Naive thymus-derived CD4-positive, alpha-beta T cell (primary cell): ENCODE measurements at regions of chr11 and their contacts with region 1.

Region 1: DNA sequence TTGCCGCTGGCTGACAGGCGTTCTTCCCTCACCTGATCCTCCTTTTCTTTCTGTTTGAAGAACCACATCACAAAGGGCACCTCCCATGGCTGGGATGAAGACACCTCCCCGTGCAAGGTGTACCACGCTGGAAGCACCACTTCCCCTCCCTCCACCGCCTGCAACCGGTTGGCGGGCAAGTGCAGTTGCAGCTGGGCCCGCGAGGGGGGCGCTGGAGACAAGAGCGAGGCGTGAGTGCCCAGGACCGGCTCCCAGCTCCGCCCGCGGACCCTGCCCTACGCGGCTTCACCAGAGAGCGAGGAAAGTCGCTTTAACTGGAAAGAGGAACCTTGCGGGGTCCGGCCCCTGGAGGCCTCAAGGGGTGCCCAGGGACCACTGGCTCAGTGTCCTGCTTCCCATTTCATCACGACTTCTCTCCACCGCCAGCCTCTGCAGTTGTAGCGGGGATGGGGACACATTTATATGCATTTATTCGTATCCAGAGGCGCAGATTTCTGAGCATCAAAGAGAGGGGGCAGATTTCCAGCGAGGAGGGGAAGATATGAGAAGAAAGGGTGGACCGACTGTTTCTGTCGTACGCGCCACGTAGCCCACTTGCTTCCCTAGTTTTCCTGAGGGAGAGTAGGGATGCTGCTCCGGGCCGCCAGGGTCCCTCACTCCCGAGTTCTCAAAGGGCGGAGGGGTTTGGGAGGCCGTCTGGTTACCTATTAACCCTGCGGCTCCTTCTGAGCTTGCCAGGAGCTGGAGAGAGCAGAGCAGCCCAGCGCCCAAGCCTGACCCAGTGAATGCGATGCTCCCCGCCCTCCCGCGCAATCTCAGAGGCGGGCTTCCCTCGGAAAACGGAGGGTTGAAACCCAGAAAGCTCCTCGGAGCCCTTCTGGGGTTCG is 3.5 kb downstream of the ESAM start:
- DNase-seq: peak in 8 of 9 donors; percentile 61 to 73 (median 66)
- ATAC-seq: peak; percentile 78
- H3K4me3 ChIP-seq: peak overlapping the region; percentile 27
- H3K4me3 Mint-ChIP-seq: peak overlapping the region; percentile 52 to 98 (median 76)
- H3K27ac ChIP-seq: no peak overlapping the region
- H3K27ac Mint-ChIP-seq: peak overlapping the region in 2 of 9 donors; percentile 38 to 41
- H3K4me1 ChIP-seq: peaks cover 8 to 31% of the 10 kb centered on the region in 2 donors
- H3K4me1 Mint-ChIP-seq: peaks cover 6 to 40% (median 24%) of the 10 kb centered on the region in 7 donors
- H3K27me3 ChIP-seq: peaks cover 7 to 16% of the 10 kb centered on the region in 2 donors
- H3K27me3 Mint-ChIP-seq: peaks cover 36 to 60% (median 53%) of the 10 kb centered on the region in 5 donors

Region 2: GRCh38 chr11:124415356-124415923 is 343.1 kb before region 1 on chr11:
- CTCF ChIA-PET with region 1: no interaction called
- POLR2A ChIA-PET with region 1: no interaction called
- intact Hi-C with region 1: loop called in 1 of 2 experiments (anchors 5 kb)
- DNase-seq: peak in 3 of 9 donors; percentile 0 to 11 (median 2)
- ATAC-seq: no peak
- H3K4me3 ChIP-seq: no peak overlapping the region
- H3K4me3 Mint-ChIP-seq: no peak overlapping the region
- H3K27ac ChIP-seq: no peak overlapping the region
- H3K27ac Mint-ChIP-seq: no peak overlapping the region
- H3K4me1 ChIP-seq: no peaks in the 10 kb centered on the region
- H3K4me1 Mint-ChIP-seq: peaks cover 0 to 2% (median 0%) of the 10 kb centered on the region in 7 donors
- H3K27me3 ChIP-seq: no peaks in the 10 kb centered on the region
- H3K27me3 Mint-ChIP-seq: peaks cover 6 to 35% (median 26%) of the 10 kb centered on the region in 5 donors

Region 3: DNA sequence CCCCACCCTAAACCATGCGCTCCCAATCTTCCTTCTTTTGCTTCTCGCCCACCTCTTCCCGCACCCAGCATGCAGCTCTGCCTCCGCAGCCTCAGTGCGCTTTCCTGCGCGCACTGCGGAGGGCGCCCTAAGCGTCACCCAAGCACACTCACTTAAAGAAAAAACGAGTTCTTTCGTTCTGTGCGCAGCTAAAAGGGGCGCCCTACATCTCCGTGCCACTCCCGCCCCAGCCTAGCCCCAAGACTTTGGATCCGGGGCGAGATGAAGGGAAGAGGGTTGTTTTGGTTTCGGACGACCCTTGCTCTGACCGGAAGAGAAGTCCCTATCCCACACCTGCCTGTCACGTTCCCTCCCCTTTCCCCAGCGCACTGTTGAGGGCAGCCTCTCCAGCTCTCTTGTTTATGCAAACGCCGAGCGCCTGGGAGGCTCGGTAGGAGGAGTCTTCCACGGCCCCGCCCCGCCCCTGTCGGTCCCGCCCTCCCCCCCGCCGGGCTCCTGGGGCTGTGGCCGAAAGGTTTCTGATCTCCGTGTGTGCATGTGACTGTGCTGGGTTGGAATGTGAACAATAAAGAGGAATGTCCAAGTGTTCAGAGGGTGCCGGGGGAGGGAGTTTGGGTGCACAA is 11.8 kb before region 1 on chr11:
- CTCF ChIA-PET with region 1: interaction called, 38 read pairs
- POLR2A ChIA-PET with region 1: interaction called, 42 read pairs
- intact Hi-C with region 1: loop called (anchors 1 kb)
- DNase-seq: peak; percentile 66 to 88 (median 85)
- ATAC-seq: peak; percentile 93
- H3K4me3 ChIP-seq: peak overlapping the region; percentile 99
- H3K4me3 Mint-ChIP-seq: peak overlapping the region; percentile 91 to 100 (median 98)
- H3K27ac ChIP-seq: peak overlapping the region; percentile 72
- H3K27ac Mint-ChIP-seq: peak overlapping the region; percentile 91 to 98 (median 96)
- H3K4me1 ChIP-seq: peaks cover 0 to 3% of the 10 kb centered on the region in 2 donors
- H3K4me1 Mint-ChIP-seq: peaks cover 4 to 37% (median 19%) of the 10 kb centered on the region in 7 donors
- H3K27me3 ChIP-seq: no peaks in the 10 kb centered on the region
- H3K27me3 Mint-ChIP-seq: peaks cover 0 to 22% (median 0%) of the 10 kb centered on the region in 5 donors

Region 4: GRCh38 chr11:124800226-124800929 is 41.8 kb after region 1 on chr11 and contains the start of gene MSANTD2:
- CTCF ChIA-PET with region 1: interaction called, 14 read pairs
- POLR2A ChIA-PET with region 1: interaction called, 7 read pairs
- intact Hi-C with region 1: loop called (anchors 1 kb)
- DNase-seq: peak; percentile 65 to 89 (median 73)
- ATAC-seq: peak; percentile 92
- H3K4me3 ChIP-seq: peak within 1 kb of the TSS; percentile 71
- H3K4me3 Mint-ChIP-seq: peak within 1 kb of the TSS; percentile 88 to 97 (median 96)
- H3K27ac ChIP-seq: peak within 1 kb of the TSS; percentile 93
- H3K27ac Mint-ChIP-seq: peak within 1 kb of the TSS; percentile 88 to 98 (median 94)
- H3K4me1 ChIP-seq: peaks cover 8 to 14% of the 10 kb centered on the region in 2 donors
- H3K4me1 Mint-ChIP-seq: peaks cover 13 to 38% (median 32%) of the 10 kb centered on the region in 7 donors
- H3K27me3 ChIP-seq: no peaks in the 10 kb centered on the region
- H3K27me3 Mint-ChIP-seq: peaks cover 0 to 24% (median 0%) of the 10 kb centered on the region in 5 donors
- total RNA-seq, gene MSANTD2: 9.1 to 29.5 (median 14.4) TPM

Region 5: DNA sequence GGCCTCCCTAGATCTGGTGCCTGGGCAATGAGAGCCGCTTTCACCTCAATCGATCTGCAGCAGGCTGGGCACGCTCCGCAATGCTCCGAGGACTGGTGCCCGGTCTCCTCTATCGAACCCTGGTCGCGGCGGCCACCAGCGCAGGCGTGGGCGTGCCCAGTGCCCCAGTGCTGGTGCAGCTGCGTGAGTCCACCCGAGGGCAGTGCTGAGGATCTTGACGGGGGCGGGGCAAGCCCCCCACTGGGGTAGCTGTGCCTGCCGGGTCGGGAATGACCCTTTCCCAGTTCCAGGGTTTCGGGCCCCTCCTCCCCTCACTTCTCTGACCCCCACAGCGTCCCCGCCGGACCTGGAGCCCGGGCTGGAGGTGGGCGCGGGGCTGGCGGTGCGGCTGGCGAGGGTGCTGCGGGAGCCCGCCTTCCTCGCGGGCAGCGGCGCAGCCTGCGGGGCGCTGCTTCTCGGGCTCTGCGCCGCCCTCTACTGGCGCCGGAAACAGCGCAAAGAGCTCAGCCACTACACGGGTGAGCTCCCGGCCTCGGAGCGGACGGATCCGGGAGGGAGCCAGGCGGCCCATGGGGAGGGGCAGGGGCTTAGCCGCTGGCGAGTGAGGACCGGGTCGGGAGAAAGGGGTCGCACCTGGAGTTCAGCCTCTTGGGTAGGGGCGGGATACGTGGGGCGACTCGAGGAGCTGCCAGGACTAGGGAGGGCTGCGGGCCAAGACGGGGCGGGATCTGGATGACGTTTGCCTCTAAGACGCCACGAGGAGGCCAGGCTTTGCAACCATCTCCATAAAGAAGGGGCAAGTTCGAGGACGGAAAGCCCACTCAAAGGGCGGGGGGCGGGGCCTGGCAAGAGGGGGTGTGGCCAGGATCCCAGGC is 117.6 kb after region 1 on chr11:
- CTCF ChIA-PET with region 1: no interaction called
- POLR2A ChIA-PET with region 1: no interaction called
- intact Hi-C with region 1: loop called in 1 of 2 experiments (anchors 2 kb)
- DNase-seq: peak; percentile 71 to 84 (median 81)
- ATAC-seq: peak; percentile 94
- H3K4me3 ChIP-seq: peak overlapping the region; percentile 98
- H3K4me3 Mint-ChIP-seq: peak overlapping the region; percentile 85 to 94 (median 90)
- H3K27ac ChIP-seq: peak overlapping the region; percentile 79
- H3K27ac Mint-ChIP-seq: peak overlapping the region; percentile 77 to 95 (median 92)
- H3K4me1 ChIP-seq: peaks cover 7 to 9% of the 10 kb centered on the region in 2 donors
- H3K4me1 Mint-ChIP-seq: peaks cover 11 to 34% (median 24%) of the 10 kb centered on the region in 7 donors
- H3K27me3 ChIP-seq: peaks cover 0 to 3% of the 10 kb centered on the region in 2 donors
- H3K27me3 Mint-ChIP-seq: peaks cover 18 to 49% (median 34%) of the 10 kb centered on the region in 5 donors